GM12878 (cell line): ENCODE measurements at regions of chr2 and their contacts with region 1.

Region 1: DNA sequence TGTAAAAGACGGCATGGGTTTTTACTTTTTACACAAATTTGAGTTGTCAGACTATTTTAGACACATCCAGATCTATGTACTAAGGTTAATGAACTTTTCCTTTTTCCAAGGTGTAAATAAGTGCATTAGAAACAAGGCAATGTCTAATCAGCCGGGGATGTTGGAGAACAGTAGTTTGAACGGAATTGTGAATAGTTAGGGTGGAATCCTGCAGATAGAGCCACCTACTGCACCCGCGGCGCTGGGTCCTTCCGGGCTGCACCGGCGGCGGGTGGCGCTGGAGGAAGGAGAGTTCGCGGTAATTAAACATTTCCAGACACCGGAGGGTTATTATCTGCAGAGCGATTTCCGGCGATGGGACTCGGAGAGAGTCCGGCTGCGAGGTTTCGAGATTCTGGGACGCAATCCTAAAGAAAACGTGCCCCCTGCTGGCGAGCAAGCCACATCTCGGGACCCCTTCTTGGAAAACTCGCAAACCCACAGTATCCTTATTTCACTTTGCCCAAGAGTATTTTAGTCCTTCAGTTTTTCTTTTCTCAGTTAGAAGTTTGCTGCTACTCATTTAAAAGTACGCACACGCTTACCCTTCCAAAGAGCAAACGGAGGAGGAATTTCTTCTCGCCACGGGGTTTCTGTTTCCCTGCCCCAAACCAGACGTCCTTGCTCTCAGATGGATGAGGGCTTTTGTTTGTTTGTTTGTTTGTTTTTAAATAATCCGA is 4.5 kb upstream of the OSR1 start:
- DNase-seq: no peak
- ATAC-seq: peak; percentile 78
- H3K4me3 ChIP-seq: peak overlapping the region; percentile 64
- H3K27ac ChIP-seq: no peak overlapping the region
- H3K4me1 ChIP-seq: peaks cover 6% of the 10 kb centered on the region; the same call in 1 of the 2 replicates
- H3K27me3 ChIP-seq: peaks cover 20 to 51% of the 10 kb centered on the region in 2 experiments
- CTCF ChIP-seq: peak; percentile 51 to 68 (median 62); a peak in 5 of 6 replicates
- EP300 ChIP-seq: no peak
- POLR2A ChIP-seq: no peak
- RAD21 ChIP-seq: peak; percentile 60

Region 2: DNA sequence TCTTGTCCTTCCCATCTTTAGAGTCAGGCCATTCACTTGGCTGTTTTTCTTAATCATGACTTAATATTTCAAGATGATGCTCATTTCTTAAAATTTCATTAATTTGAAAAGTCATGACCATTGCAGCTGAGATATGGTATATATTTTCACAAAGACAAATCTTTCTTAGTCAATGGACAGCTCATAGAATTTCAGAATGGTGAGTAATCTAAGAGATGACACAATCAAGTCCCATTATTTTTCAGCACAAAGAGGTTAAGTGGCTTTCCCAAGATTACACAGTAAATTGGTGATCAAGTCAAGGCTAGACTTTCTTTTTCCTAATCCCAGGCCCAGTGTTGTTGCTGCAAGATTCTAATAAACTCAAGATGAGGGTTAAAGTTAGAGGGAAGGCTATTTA is 739.1 kb before region 1 on chr2:
- CTCF ChIA-PET with region 1: no interaction called
- POLR2A ChIA-PET with region 1: no interaction called
- RAD21 ChIA-PET with region 1: no interaction called
- SMC1A ChIA-PET with region 1: no interaction called
- in situ Hi-C with region 1: no loop called
- intact Hi-C with region 1: no loop called
- DNase-seq: no peak
- ATAC-seq: no peak
- H3K4me3 ChIP-seq: no peak overlapping the region
- H3K27ac ChIP-seq: no peak overlapping the region
- H3K4me1 ChIP-seq: no peaks in the 10 kb centered on the region
- H3K27me3 ChIP-seq: no peaks in the 10 kb centered on the region
- CTCF ChIP-seq: no peak
- EP300 ChIP-seq: no peak
- POLR2A ChIP-seq: no peak
- RAD21 ChIP-seq: no peak

Region 3: DNA sequence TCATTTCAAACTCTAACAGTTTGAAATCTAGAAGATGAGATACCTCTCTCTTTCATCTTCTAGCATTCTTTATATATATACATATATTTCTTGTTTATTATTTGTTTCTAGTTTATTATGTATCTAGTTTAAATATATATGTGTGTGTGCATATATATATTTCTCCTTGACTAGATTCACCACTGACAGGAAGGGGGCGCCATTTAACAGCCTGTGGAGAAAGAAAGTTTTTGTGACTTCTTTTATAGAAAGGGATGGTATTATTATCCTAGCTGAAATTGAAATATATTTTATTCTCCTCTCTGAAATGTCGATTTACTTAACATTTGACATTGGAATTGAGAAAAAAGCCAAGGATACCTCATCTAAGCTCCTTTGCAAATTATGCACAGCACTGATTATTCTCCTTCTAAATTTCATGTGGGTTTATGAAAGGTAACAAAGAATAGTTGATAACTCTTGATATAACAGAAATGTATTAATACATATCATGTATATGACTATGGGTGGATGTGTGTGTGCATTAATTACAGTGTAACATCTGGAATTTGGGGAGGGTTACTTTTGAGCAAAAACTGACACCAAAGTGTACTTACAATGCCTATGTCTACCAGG is 612.9 kb before region 1 on chr2:
- CTCF ChIA-PET with region 1: no interaction called
- POLR2A ChIA-PET with region 1: no interaction called
- RAD21 ChIA-PET with region 1: no interaction called
- SMC1A ChIA-PET with region 1: no interaction called
- in situ Hi-C with region 1: no loop called
- intact Hi-C with region 1: loop called (anchors 2 kb)
- DNase-seq: no peak
- ATAC-seq: peak; percentile 56
- H3K4me3 ChIP-seq: no peak overlapping the region
- H3K27ac ChIP-seq: no peak overlapping the region
- H3K4me1 ChIP-seq: no peaks in the 10 kb centered on the region
- H3K27me3 ChIP-seq: no peaks in the 10 kb centered on the region
- CTCF ChIP-seq: peak; percentile 43 to 69 (median 46); a peak in 5 of 6 replicates
- EP300 ChIP-seq: no peak
- POLR2A ChIP-seq: no peak
- RAD21 ChIP-seq: peak; percentile 89

Region 4: DNA sequence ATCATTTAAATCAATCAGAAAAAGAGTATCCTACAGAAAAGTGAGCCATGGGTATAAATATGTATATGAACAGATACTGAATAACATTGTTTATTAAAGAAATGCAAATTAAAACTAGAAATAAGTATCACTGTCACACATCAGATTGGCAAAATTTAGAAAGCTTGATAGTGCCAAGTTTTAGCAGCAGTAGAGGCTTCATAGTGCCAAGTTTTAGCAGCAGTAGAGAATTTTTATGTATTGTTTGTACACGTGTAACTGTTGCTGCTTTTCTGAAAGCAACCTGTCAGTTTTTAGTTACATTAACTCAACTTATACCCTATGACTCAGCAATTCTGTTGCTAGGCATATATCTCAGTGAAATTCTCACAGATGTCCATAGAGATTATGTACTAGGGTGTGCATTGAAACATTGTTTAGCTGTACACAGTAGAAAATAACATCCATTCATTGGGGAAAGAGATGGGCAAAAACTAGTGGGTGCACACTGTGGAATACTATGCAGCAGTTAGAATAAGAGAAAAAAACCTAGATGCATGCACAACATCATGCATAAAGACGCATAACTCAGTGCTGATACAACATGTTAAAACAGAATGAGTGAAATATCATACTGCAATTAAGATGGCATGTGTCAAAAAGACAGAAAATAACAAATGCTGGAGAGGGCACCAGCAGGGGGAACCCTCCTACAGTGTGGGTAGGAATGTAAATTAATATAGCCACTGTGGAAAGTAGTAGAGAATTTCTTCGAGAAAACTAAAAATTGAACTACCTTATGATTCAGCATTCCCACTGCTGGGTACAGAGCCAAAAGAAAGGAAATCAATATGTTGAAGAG is 479.1 kb before region 1 on chr2:
- CTCF ChIA-PET with region 1: no interaction called
- POLR2A ChIA-PET with region 1: no interaction called
- RAD21 ChIA-PET with region 1: no interaction called
- SMC1A ChIA-PET with region 1: no interaction called
- in situ Hi-C with region 1: no loop called
- intact Hi-C with region 1: loop called (anchors 1 kb)
- DNase-seq: no peak
- ATAC-seq: peak; percentile 55; the same call in 1 of the 3 replicates
- H3K4me3 ChIP-seq: no peak overlapping the region
- H3K27ac ChIP-seq: no peak overlapping the region
- H3K4me1 ChIP-seq: no peaks in the 10 kb centered on the region
- H3K27me3 ChIP-seq: no peaks in the 10 kb centered on the region
- CTCF ChIP-seq: peak; percentile 36 to 45 (median 38); a peak in 4 of 6 replicates
- EP300 ChIP-seq: no peak
- POLR2A ChIP-seq: no peak
- RAD21 ChIP-seq: peak; percentile 50; the same call in 1 of the 2 replicates